ENCODE measurements at regions of chr4 and their contacts with region 1.

Region 1: GRCh38 chr4:153318696-153319320 is 25.7 kb upstream of the MND1 start:
- DNase-seq: peak in 3 of 9 experiments; percentile 6 to 53 (median 35)
- ATAC-seq: no peak
- H3K4me3 ChIP-seq: no peak overlapping the region
- H3K4me3 Mint-ChIP-seq: no peak overlapping the region
- H3K27ac ChIP-seq: no peak overlapping the region
- H3K27ac Mint-ChIP-seq: no peak overlapping the region
- H3K4me1 ChIP-seq: no peaks in the 10 kb centered on the region
- H3K4me1 Mint-ChIP-seq: no peaks in the 10 kb centered on the region
- H3K27me3 ChIP-seq: peaks cover 0 to 2% of the 10 kb centered on the region in 2 experiments
- H3K27me3 Mint-ChIP-seq: no peaks in the 10 kb centered on the region
- CTCF ChIP-seq: no peak

Region 2: GRCh38 chr4:153232768-153233167 is 86.0 kb before region 1 on chr4:
- CTCF ChIA-PET with region 1: interaction called, 3 read pairs
- POLR2A ChIA-PET with region 1: no interaction called
- intact Hi-C with region 1: loop called in 1 of 2 experiments (anchors 5 kb)
- DNase-seq: no peak
- ATAC-seq: no peak
- H3K4me3 ChIP-seq: no peak overlapping the region
- H3K4me3 Mint-ChIP-seq: no peak overlapping the region
- H3K27ac ChIP-seq: no peak overlapping the region
- H3K27ac Mint-ChIP-seq: no peak overlapping the region
- H3K4me1 ChIP-seq: no peaks in the 10 kb centered on the region
- H3K4me1 Mint-ChIP-seq: peaks cover 10% of the 10 kb centered on the region
- H3K27me3 ChIP-seq: no peaks in the 10 kb centered on the region
- H3K27me3 Mint-ChIP-seq: peaks cover 12% of the 10 kb centered on the region
- CTCF ChIP-seq: no peak

Region 3: GRCh38 chr4:153409412-153409811 is 90.6 kb after region 1 on chr4:
- CTCF ChIA-PET with region 1: no interaction called
- POLR2A ChIA-PET with region 1: no interaction called
- intact Hi-C with region 1: no loop called
- DNase-seq: no peak
- ATAC-seq: no peak
- H3K4me3 ChIP-seq: no peak overlapping the region
- H3K4me3 Mint-ChIP-seq: no peak overlapping the region
- H3K27ac ChIP-seq: no peak overlapping the region
- H3K27ac Mint-ChIP-seq: no peak overlapping the region
- H3K4me1 ChIP-seq: peaks cover 4% of the 10 kb centered on the region
- H3K4me1 Mint-ChIP-seq: peaks cover 9% of the 10 kb centered on the region
- H3K27me3 ChIP-seq: no peaks in the 10 kb centered on the region
- H3K27me3 Mint-ChIP-seq: no peaks in the 10 kb centered on the region
- CTCF ChIP-seq: no peak